ENCODE measurements at regions of chr6 and their contacts with region 1.

Region 1: GRCh38 chr6:2285510-2285909 is 40.1 kb upstream of the GMDS start:
- DNase-seq: no peak
- ATAC-seq: no peak
- H3K4me3 ChIP-seq: no peak overlapping the region
- H3K4me3 Mint-ChIP-seq: no peak overlapping the region
- H3K27ac ChIP-seq: no peak overlapping the region
- H3K27ac Mint-ChIP-seq: no peak overlapping the region
- H3K4me1 ChIP-seq: no peaks in the 10 kb centered on the region
- H3K4me1 Mint-ChIP-seq: no peaks in the 10 kb centered on the region
- H3K27me3 ChIP-seq: no peaks in the 10 kb centered on the region
- H3K27me3 Mint-ChIP-seq: no peaks in the 10 kb centered on the region
- CTCF ChIP-seq: no peak

Region 2: GRCh38 chr6:878187-878586 is 1407.3 kb before region 1 on chr6:
- CTCF ChIA-PET with region 1: no interaction called
- POLR2A ChIA-PET with region 1: no interaction called
- intact Hi-C with region 1: no loop called
- DNase-seq: no peak
- ATAC-seq: no peak
- H3K4me3 ChIP-seq: no peak overlapping the region
- H3K4me3 Mint-ChIP-seq: no peak overlapping the region
- H3K27ac ChIP-seq: no peak overlapping the region
- H3K27ac Mint-ChIP-seq: no peak overlapping the region
- H3K4me1 ChIP-seq: no peaks in the 10 kb centered on the region
- H3K4me1 Mint-ChIP-seq: no peaks in the 10 kb centered on the region
- H3K27me3 ChIP-seq: no peaks in the 10 kb centered on the region
- H3K27me3 Mint-ChIP-seq: peaks cover 30% of the 10 kb centered on the region
- CTCF ChIP-seq: no peak

Region 3: GRCh38 chr6:2327591-2327990 is 42.1 kb after region 1 on chr6:
- CTCF ChIA-PET with region 1: no interaction called
- POLR2A ChIA-PET with region 1: no interaction called
- intact Hi-C with region 1: loop called in 1 of 2 experiments (anchors 2 kb)
- DNase-seq: no peak
- ATAC-seq: no peak
- H3K4me3 ChIP-seq: no peak overlapping the region
- H3K4me3 Mint-ChIP-seq: no peak overlapping the region
- H3K27ac ChIP-seq: no peak overlapping the region
- H3K27ac Mint-ChIP-seq: no peak overlapping the region
- H3K4me1 ChIP-seq: no peaks in the 10 kb centered on the region
- H3K4me1 Mint-ChIP-seq: no peaks in the 10 kb centered on the region
- H3K27me3 ChIP-seq: no peaks in the 10 kb centered on the region
- H3K27me3 Mint-ChIP-seq: no peaks in the 10 kb centered on the region
- CTCF ChIP-seq: no peak

Measured in CD8-positive, alpha-beta T cell (primary cell).